ENCODE measurements at regions of chr1 and their contacts with region 1.

Region 1: GRCh38 chr1:75203415-75204277 is 69.5 kb downstream of the LHX8 start:
- DNase-seq: no peak
- H3K4me3 ChIP-seq: no peak overlapping the region
- H3K27ac ChIP-seq: no peak overlapping the region
- H3K4me1 ChIP-seq: no peaks in the 10 kb centered on the region
- H3K27me3 ChIP-seq: no peaks in the 10 kb centered on the region
- CTCF ChIP-seq: peak in 2 of 3 donors; percentile 31 to 73
- EP300 ChIP-seq: no peak
- POLR2A ChIP-seq: no peak

Region 2: GRCh38 chr1:74771913-74772515 is 431.6 kb before region 1 on chr1:
- intact Hi-C with region 1: loop called in 1 of 4 experiments (anchors 10 kb)
- DNase-seq: no peak
- H3K4me3 ChIP-seq: no peak overlapping the region
- H3K27ac ChIP-seq: no peak overlapping the region
- H3K4me1 ChIP-seq: no peaks in the 10 kb centered on the region
- H3K27me3 ChIP-seq: no peaks in the 10 kb centered on the region
- CTCF ChIP-seq: peak; percentile 35 to 51 (median 36)
- EP300 ChIP-seq: no peak
- POLR2A ChIP-seq: no peak

Measured in ovary (tissue), 10 donors.